ENCODE measurements at regions of chr18 and their contacts with region 1.

Region 1: GRCh38 chr18:23890589-23890988 is 124.0 kb upstream of the TTC39C start:
- DNase-seq: peak; percentile 56
- ATAC-seq: peak; percentile 54
- H3K4me3 ChIP-seq: no peak overlapping the region
- H3K27ac ChIP-seq: no peak overlapping the region
- H3K4me1 ChIP-seq: peaks cover 1% of the 10 kb centered on the region; the same call in 1 of the 2 replicates
- H3K27me3 ChIP-seq: 0 out of 2 replicates have a peak, but pooled peaks cover 2% of the 10 kb centered on the region
- CTCF ChIP-seq: no peak
- POLR2A ChIP-seq: no peak
- RAD21 ChIP-seq: no peak

Region 2: GRCh38 chr18:23837591-23837990 is 53.0 kb before region 1 on chr18:
- CTCF ChIA-PET with region 1: no interaction called
- POLR2A ChIA-PET with region 1: no interaction called
- dilution Hi-C with region 1: no loop called
- in situ Hi-C with region 1: no loop called
- intact Hi-C with region 1: loop called (anchors 5 kb)
- DNase-seq: peak; percentile 86
- ATAC-seq: peak; percentile 86
- H3K4me3 ChIP-seq: no peak overlapping the region
- H3K27ac ChIP-seq: peak overlapping the region; percentile 33; the same call in 1 of the 2 replicates
- H3K4me1 ChIP-seq: peaks cover 8% of the 10 kb centered on the region; the same call in 1 of the 2 replicates
- H3K27me3 ChIP-seq: no peaks in the 10 kb centered on the region
- CTCF ChIP-seq: no peak
- POLR2A ChIP-seq: no peak
- RAD21 ChIP-seq: no peak

Region 3: DNA sequence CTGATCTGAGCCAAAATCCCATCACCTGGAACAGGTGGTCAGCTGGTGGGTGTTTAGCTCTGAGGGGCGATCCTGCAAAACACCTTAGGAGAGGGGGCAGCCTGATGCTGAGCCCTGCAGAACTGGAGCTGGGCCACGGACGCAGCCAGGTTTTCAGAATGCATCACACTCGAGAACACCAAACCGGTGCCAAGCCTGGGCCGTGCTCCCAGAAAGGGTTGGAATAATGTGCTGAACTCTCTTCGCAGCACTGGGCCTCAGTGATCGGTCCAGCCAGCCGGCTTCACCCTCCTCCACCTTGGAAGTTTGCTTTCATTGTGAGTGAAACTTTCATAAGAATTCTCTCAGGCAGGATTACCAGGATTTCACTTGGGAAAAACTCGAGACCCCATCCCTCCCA is 67.4 kb after region 1 on chr18:
- CTCF ChIA-PET with region 1: no interaction called
- POLR2A ChIA-PET with region 1: no interaction called
- dilution Hi-C with region 1: no loop called
- in situ Hi-C with region 1: no loop called
- intact Hi-C with region 1: no loop called
- DNase-seq: no peak
- ATAC-seq: peak; percentile 27; the same call in 1 of the 2 replicates
- H3K4me3 ChIP-seq: no peak overlapping the region
- H3K27ac ChIP-seq: no peak overlapping the region
- H3K4me1 ChIP-seq: no peaks in the 10 kb centered on the region
- H3K27me3 ChIP-seq: peaks cover 4% of the 10 kb centered on the region; the same call in 1 of the 2 replicates
- CTCF ChIP-seq: no peak
- POLR2A ChIP-seq: no peak
- RAD21 ChIP-seq: no peak

Region 4: GRCh38 chr18:24103320-24104021 is 212.9 kb after region 1 on chr18:
- CTCF ChIA-PET with region 1: no interaction called
- POLR2A ChIA-PET with region 1: no interaction called
- dilution Hi-C with region 1: no loop called
- in situ Hi-C with region 1: no loop called
- intact Hi-C with region 1: no loop called
- DNase-seq: peak; percentile 11
- ATAC-seq: no peak
- H3K4me3 ChIP-seq: no peak overlapping the region
- H3K27ac ChIP-seq: no peak overlapping the region
- H3K4me1 ChIP-seq: no peaks in the 10 kb centered on the region
- H3K27me3 ChIP-seq: no peaks in the 10 kb centered on the region
- CTCF ChIP-seq: no peak
- POLR2A ChIP-seq: no peak
- RAD21 ChIP-seq: no peak

Region 5: DNA sequence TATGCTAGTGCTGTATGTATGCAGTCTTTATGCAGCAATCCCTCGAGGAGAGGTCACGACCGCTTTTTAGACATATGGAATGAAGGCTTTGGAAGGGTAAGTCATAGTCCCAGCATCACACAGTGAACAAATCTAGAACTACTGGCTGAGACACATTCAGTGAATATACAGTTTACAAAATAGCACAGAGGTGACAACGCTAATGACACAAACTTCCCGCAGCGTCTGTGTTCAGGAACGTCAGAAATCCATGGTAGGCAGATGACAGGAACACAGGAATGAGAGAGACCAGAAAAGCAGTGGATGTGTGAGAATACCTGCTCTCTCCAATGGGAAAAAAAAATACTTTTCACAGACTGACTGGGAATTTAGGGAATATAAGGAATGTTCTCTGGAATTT is 277.9 kb after region 1 on chr18:
- CTCF ChIA-PET with region 1: no interaction called
- POLR2A ChIA-PET with region 1: no interaction called
- dilution Hi-C with region 1: no loop called
- in situ Hi-C with region 1: no loop called
- intact Hi-C with region 1: no loop called
- DNase-seq: no peak
- ATAC-seq: no peak; the same call in 1 of the 2 replicates
- H3K4me3 ChIP-seq: no peak overlapping the region
- H3K27ac ChIP-seq: no peak overlapping the region
- H3K4me1 ChIP-seq: no peaks in the 10 kb centered on the region
- H3K27me3 ChIP-seq: no peaks in the 10 kb centered on the region
- CTCF ChIP-seq: no peak
- POLR2A ChIP-seq: no peak
- RAD21 ChIP-seq: no peak

Region 6: DNA sequence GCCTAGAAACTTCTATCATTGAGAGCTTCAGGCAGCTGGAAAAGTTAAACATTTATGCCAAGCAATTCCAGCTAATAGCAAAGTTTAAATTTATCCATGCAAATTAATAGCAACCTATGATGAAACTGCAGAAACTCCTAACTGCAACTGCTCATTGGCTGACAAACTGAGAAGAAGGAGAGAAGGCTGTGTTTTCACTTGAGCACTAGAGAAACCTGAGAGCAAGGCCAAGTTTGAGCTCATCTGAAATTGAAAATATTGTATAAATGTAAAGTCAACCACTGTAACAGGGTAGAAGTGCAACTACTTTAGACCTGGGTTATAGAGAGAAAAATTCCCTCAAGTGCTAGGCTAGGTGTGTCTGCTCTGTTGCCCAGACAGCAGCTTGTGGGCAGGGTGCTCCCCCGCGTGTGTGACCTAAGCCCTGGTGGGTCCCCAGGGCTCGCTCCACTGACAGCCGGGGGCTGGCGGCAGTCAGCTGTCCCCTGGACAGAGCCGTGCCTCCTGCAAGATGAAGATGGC is 298.5 kb after region 1 on chr18:
- CTCF ChIA-PET with region 1: no interaction called
- POLR2A ChIA-PET with region 1: no interaction called
- dilution Hi-C with region 1: no loop called
- in situ Hi-C with region 1: no loop called
- intact Hi-C with region 1: no loop called
- DNase-seq: peak; percentile 70
- ATAC-seq: peak; percentile 85
- H3K4me3 ChIP-seq: no peak overlapping the region
- H3K27ac ChIP-seq: no peak overlapping the region
- H3K4me1 ChIP-seq: peaks cover 6% of the 10 kb centered on the region
- H3K27me3 ChIP-seq: no peaks in the 10 kb centered on the region
- CTCF ChIP-seq: no peak
- POLR2A ChIP-seq: no peak
- RAD21 ChIP-seq: no peak

Measured in IMR-90 (cell line).